Activated CD4-positive, alpha-beta T cell treated with anti-CD3 and anti-CD28 coated beads, Interleukin-2, amount 10 ng/mL, durations not matched to agents 24 days and 14 days (primary cell): ENCODE measurements at regions of chr15 and their contacts with region 1.

Region 1: GRCh38 chr15:81296673-81297072 is 27.3 kb downstream of the STARD5 start:
- DNase-seq: peak; percentile 94
- H3K4me3 Mint-ChIP-seq: peak overlapping the region; percentile 94
- H3K27ac Mint-ChIP-seq: peak overlapping the region; percentile 95
- H3K4me1 Mint-ChIP-seq: peaks cover 75% of the 10 kb centered on the region
- H3K27me3 Mint-ChIP-seq: no peaks in the 10 kb centered on the region

Region 2: GRCh38 chr15:81000624-81001151 is 296.0 kb before region 1 on chr15 and contains the start of gene TLNRD1:
- intact Hi-C with region 1: loop called (anchors 1 kb)
- DNase-seq: peak; percentile 97
- H3K4me3 Mint-ChIP-seq: peak within 1 kb of the TSS; percentile 98
- H3K27ac Mint-ChIP-seq: peak within 1 kb of the TSS; percentile 98
- H3K4me1 Mint-ChIP-seq: peaks cover 49% of the 10 kb centered on the region
- H3K27me3 Mint-ChIP-seq: no peaks in the 10 kb centered on the region
- total RNA-seq, gene TLNRD1: 25.6 and 25.8 TPM in 2 replicates

Region 3: GRCh38 chr15:81274931-81275707 is 21.6 kb before region 1 on chr15:
- intact Hi-C with region 1: loop called (anchors 1 kb)
- DNase-seq: peak; percentile 94
- H3K4me3 Mint-ChIP-seq: peak overlapping the region; percentile 15
- H3K27ac Mint-ChIP-seq: peak overlapping the region; percentile 48
- H3K4me1 Mint-ChIP-seq: peaks cover 29% of the 10 kb centered on the region
- H3K27me3 Mint-ChIP-seq: no peaks in the 10 kb centered on the region

Region 4: GRCh38 chr15:81323944-81324881 is 27.5 kb after region 1 on chr15 and contains the start of gene STARD5:
- intact Hi-C with region 1: loop called (anchors 1 kb)
- DNase-seq: peak; percentile 100
- H3K4me3 Mint-ChIP-seq: peak within 1 kb of the TSS; percentile 91
- H3K27ac Mint-ChIP-seq: peak within 1 kb of the TSS; percentile 73
- H3K4me1 Mint-ChIP-seq: peaks cover 23% of the 10 kb centered on the region
- H3K27me3 Mint-ChIP-seq: no peaks in the 10 kb centered on the region
- total RNA-seq, gene STARD5: 4.6 and 5.8 TPM in 2 replicates

Region 5: GRCh38 chr15:81346611-81347010 is 49.9 kb after region 1 on chr15:
- intact Hi-C with region 1: no loop called
- DNase-seq: no peak
- H3K4me3 Mint-ChIP-seq: no peak overlapping the region
- H3K27ac Mint-ChIP-seq: no peak overlapping the region
- H3K4me1 Mint-ChIP-seq: no peaks in the 10 kb centered on the region
- H3K27me3 Mint-ChIP-seq: no peaks in the 10 kb centered on the region

Region 6: GRCh38 chr15:82046666-82047452 is 750.2 kb after region 1 on chr15:
- intact Hi-C with region 1: loop called (anchors 5 kb)
- DNase-seq: peak; percentile 96
- H3K4me3 Mint-ChIP-seq: peak overlapping the region; percentile 91
- H3K27ac Mint-ChIP-seq: peak overlapping the region; percentile 89
- H3K4me1 Mint-ChIP-seq: peaks cover 17% of the 10 kb centered on the region
- H3K27me3 Mint-ChIP-seq: peaks cover 32% of the 10 kb centered on the region